ENCODE measurements at regions of chr4 and their contacts with region 1.

Region 1: GRCh38 chr4:41281038-41281634 is 24.4 kb downstream of the UCHL1 start:
- DNase-seq: peak; percentile 47 to 69 (median 64)
- H3K4me3 ChIP-seq: no peak overlapping the region
- H3K4me3 Mint-ChIP-seq: no peak overlapping the region
- H3K27ac ChIP-seq: no peak overlapping the region
- H3K27ac Mint-ChIP-seq: no peak overlapping the region
- H3K4me1 ChIP-seq: no peaks in the 10 kb centered on the region
- H3K4me1 Mint-ChIP-seq: no peaks in the 10 kb centered on the region
- H3K27me3 ChIP-seq: no peaks in the 10 kb centered on the region
- H3K27me3 Mint-ChIP-seq: peaks cover 1 to 2% (median 2%) of the 10 kb centered on the region in 3 donors
- CTCF ChIP-seq: peak; percentile 92

Region 2: GRCh38 chr4:41375561-41375960 is 94.4 kb after region 1 on chr4:
- intact Hi-C with region 1: no loop called
- DNase-seq: no peak
- H3K4me3 ChIP-seq: no peak overlapping the region
- H3K4me3 Mint-ChIP-seq: no peak overlapping the region
- H3K27ac ChIP-seq: no peak overlapping the region
- H3K27ac Mint-ChIP-seq: no peak overlapping the region
- H3K4me1 ChIP-seq: no peaks in the 10 kb centered on the region
- H3K4me1 Mint-ChIP-seq: peaks cover 7% of the 10 kb centered on the region
- H3K27me3 ChIP-seq: no peaks in the 10 kb centered on the region
- H3K27me3 Mint-ChIP-seq: peaks cover 1 to 2% (median 2%) of the 10 kb centered on the region in 3 donors
- CTCF ChIP-seq: no peak

Region 3: GRCh38 chr4:41661442-41662076 is 380.4 kb after region 1 on chr4:
- intact Hi-C with region 1: loop called (anchors 2 kb)
- DNase-seq: peak; percentile 17 to 54 (median 49)
- H3K4me3 ChIP-seq: no peak overlapping the region
- H3K4me3 Mint-ChIP-seq: no peak overlapping the region
- H3K27ac ChIP-seq: no peak overlapping the region
- H3K27ac Mint-ChIP-seq: no peak overlapping the region
- H3K4me1 ChIP-seq: no peaks in the 10 kb centered on the region
- H3K4me1 Mint-ChIP-seq: peaks cover 3% of the 10 kb centered on the region
- H3K27me3 ChIP-seq: no peaks in the 10 kb centered on the region
- H3K27me3 Mint-ChIP-seq: peaks cover 4% of the 10 kb centered on the region in 3 donors
- CTCF ChIP-seq: peak; percentile 95

Region 4: GRCh38 chr4:41882625-41883347 is 601.6 kb after region 1 on chr4:
- intact Hi-C with region 1: loop called (anchors 2 to 5 kb)
- DNase-seq: peak; percentile 12 to 31 (median 18)
- H3K4me3 ChIP-seq: peak overlapping the region in 1 of 3 experiments; percentile 42
- H3K4me3 Mint-ChIP-seq: peak overlapping the region in 1 of 2 donors; percentile 73
- H3K27ac ChIP-seq: no peak overlapping the region
- H3K27ac Mint-ChIP-seq: no peak overlapping the region
- H3K4me1 ChIP-seq: peaks cover 13 to 16% of the 10 kb centered on the region in 2 donors
- H3K4me1 Mint-ChIP-seq: peaks cover 11% of the 10 kb centered on the region
- H3K27me3 ChIP-seq: peaks cover 80 to 95% of the 10 kb centered on the region in 2 donors
- H3K27me3 Mint-ChIP-seq: peaks cover 83 to 88% (median 86%) of the 10 kb centered on the region in 3 donors
- CTCF ChIP-seq: peak; percentile 95

Measured in CD14-positive monocyte (primary cell).